HCT116 (cell line): ENCODE measurements at regions of chr1 and their contacts with region 1.

Region 1: DNA sequence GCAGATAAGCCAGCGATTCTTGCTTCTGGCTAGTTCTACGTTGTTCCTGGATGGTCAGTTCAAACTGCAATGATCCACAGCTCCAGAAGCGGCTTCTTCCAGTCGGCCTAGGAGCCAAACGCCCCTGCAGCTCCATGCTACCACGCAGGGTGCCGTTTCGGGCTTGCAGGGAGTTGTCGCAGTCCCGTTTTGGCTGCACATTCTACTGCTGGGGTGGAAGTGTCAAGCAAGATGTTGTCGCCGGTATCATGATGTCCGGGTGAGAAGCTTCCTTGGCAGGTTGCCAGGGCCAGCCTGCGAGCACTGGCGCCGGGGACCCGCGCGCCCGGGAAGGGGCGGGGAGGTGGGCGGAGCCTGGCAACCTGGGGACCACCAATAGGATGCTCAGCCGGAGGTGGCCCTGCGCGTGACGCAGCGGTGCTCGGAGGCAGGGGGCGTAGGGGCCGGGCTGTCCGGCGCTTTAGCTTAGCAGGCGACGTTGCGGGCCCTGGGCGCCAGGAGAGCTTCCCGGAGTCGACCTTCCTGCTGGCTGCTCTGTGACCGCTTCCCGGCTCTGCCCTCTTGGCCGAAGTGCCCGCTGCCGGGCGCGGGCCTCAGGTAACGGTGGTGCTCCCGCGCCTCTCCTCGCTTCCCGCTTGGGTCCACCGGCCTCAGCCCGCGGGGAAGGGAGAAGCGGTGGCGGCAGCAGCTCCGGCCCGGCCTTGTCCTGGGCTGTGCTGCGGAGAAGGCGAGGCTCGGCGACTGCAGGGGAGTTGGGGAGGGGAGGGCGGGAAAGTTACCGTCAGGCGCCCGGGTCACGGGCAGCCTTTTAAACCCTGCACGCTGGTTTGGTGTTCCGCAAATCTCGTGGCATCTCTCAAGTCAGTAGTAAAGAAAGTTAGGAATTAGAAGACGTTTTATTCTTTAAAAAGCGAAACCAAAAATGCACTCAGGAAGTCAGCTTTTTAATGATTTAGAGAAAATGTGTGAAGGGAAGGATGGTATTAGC is at the start of gene SOAT1:
- DNase-seq: peak; percentile 79
- ATAC-seq: peak; percentile 95
- H3K4me3 ChIP-seq: peak within 1 kb of the TSS; percentile 67 to 80
- H3K27ac ChIP-seq: peak within 1 kb of the TSS; percentile 60
- H3K4me1 ChIP-seq: peaks cover 12 to 14% of the 10 kb centered on the region in 2 experiments
- H3K27me3 ChIP-seq: no peaks in the 10 kb centered on the region
- CTCF ChIP-seq: peak in 1 of 3 experiments; percentile 12; a peak in 1 of 6 replicates
- POLR2A ChIP-seq: peak; percentile 69
- RAD21 ChIP-seq: 0 out of 2 replicates have a peak, but pooled peaks have one; percentile 10
- total RNA-seq, gene SOAT1: 33.9 TPM

Region 2: GRCh38 chr1:179034720-179035119 is 258.9 kb before region 1 on chr1:
- CTCF ChIA-PET with region 1: no interaction called
- POLR2A ChIA-PET with region 1: no interaction called
- RAD21 ChIA-PET with region 1: no interaction called
- intact Hi-C with region 1: loop called (anchors 5 kb)
- DNase-seq: no peak
- ATAC-seq: no peak
- H3K4me3 ChIP-seq: no peak overlapping the region
- H3K27ac ChIP-seq: no peak overlapping the region
- H3K4me1 ChIP-seq: peaks cover 0 to 18% of the 10 kb centered on the region in 2 experiments; a peak in 2 of 4 replicates
- H3K27me3 ChIP-seq: no peaks in the 10 kb centered on the region
- CTCF ChIP-seq: no peak
- POLR2A ChIP-seq: no peak
- RAD21 ChIP-seq: no peak

Region 3: GRCh38 chr1:179081687-179082332 is 211.8 kb before region 1 on chr1 and contains the start of gene TOR3A:
- CTCF ChIA-PET with region 1: no interaction called
- POLR2A ChIA-PET with region 1: interaction called, 4 read pairs
- RAD21 ChIA-PET with region 1: no interaction called
- intact Hi-C with region 1: loop called (anchors 1 kb)
- DNase-seq: peak; percentile 68
- ATAC-seq: peak; percentile 92
- H3K4me3 ChIP-seq: peak within 1 kb of the TSS; percentile 73 to 82
- H3K27ac ChIP-seq: peak within 1 kb of the TSS; percentile 74
- H3K4me1 ChIP-seq: peaks cover 0 to 23% of the 10 kb centered on the region in 2 experiments; a peak in 3 of 4 replicates
- H3K27me3 ChIP-seq: no peaks in the 10 kb centered on the region
- CTCF ChIP-seq: no peak
- POLR2A ChIP-seq: no peak
- RAD21 ChIP-seq: no peak
- total RNA-seq, gene TOR3A: 27.0 TPM

Region 4: DNA sequence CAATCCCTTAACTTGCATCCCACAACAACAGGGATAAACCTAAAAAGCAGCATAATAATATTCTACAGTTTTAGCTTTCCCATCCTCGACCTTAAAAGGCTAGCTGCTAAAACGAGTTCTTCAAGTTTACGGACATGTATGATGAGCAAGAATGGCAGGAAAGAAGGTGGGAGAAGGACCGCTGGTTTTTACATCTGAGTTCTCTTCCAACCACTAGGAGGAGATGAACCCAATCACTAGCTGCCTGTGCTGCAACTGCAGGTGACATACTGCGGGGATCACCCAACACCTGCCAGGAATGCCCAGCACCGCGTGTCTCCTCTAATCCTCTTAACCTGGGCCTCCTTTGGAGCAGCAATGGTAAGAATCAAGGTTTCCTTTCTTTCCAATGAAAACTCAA is 188.3 kb before region 1 on chr1:
- CTCF ChIA-PET with region 1: no interaction called
- POLR2A ChIA-PET with region 1: no interaction called
- RAD21 ChIA-PET with region 1: no interaction called
- intact Hi-C with region 1: loop called (anchors 5 kb)
- DNase-seq: no peak
- ATAC-seq: peak; percentile 89
- H3K4me3 ChIP-seq: no peak overlapping the region
- H3K27ac ChIP-seq: no peak overlapping the region
- H3K4me1 ChIP-seq: no peaks in the 10 kb centered on the region
- H3K27me3 ChIP-seq: no peaks in the 10 kb centered on the region
- CTCF ChIP-seq: peak; percentile 59 to 68 (median 61); a peak in 5 of 6 replicates
- POLR2A ChIP-seq: no peak
- RAD21 ChIP-seq: peak; percentile 49

Region 5: GRCh38 chr1:179121159-179121938 is 172.3 kb before region 1 on chr1:
- CTCF ChIA-PET with region 1: interaction called, 14 read pairs
- POLR2A ChIA-PET with region 1: no interaction called
- RAD21 ChIA-PET with region 1: no interaction called
- intact Hi-C with region 1: loop called (anchors 1 kb)
- DNase-seq: peak; percentile 28
- ATAC-seq: peak; percentile 61; the same call in 1 of the 2 replicates
- H3K4me3 ChIP-seq: no peak overlapping the region
- H3K27ac ChIP-seq: no peak overlapping the region
- H3K4me1 ChIP-seq: peaks cover 0 to 13% of the 10 kb centered on the region in 2 experiments; a peak in 1 of 4 replicates
- H3K27me3 ChIP-seq: no peaks in the 10 kb centered on the region
- CTCF ChIP-seq: peak; percentile 61 to 70 (median 66); a peak in 5 of 6 replicates
- POLR2A ChIP-seq: no peak
- RAD21 ChIP-seq: peak; percentile 84